Caco-2 (cell line): ENCODE measurements at regions of chr16 and their contacts with region 1.

Region 1: GRCh38 chr16:27313422-27314160 is at the start of gene IL4R:
- DNase-seq: peak; percentile 85 to 88
- H3K4me3 ChIP-seq: peak within 1 kb of the TSS; percentile 83
- H3K4me3 Mint-ChIP-seq: peak within 1 kb of the TSS; percentile 88
- H3K27ac Mint-ChIP-seq: peak within 1 kb of the TSS; percentile 90
- H3K4me1 ChIP-seq: peaks cover 32% of the 10 kb centered on the region
- H3K4me1 Mint-ChIP-seq: peaks cover 25% of the 10 kb centered on the region
- H3K27me3 ChIP-seq: no peaks in the 10 kb centered on the region
- H3K27me3 Mint-ChIP-seq: no peaks in the 10 kb centered on the region
- CTCF ChIP-seq: no peak
- total RNA-seq, gene IL4R: 32.6 and 34.4 TPM in 2 replicates

Region 2: GRCh38 chr16:27268376-27269299 is 45.0 kb before region 1 on chr16 and contains the start of gene NSMCE1:
- CTCF ChIA-PET with region 1: no interaction called
- POLR2A ChIA-PET with region 1: no interaction called
- intact Hi-C with region 1: loop called (anchors 2 kb)
- DNase-seq: peak; percentile 96
- H3K4me3 ChIP-seq: peak within 1 kb of the TSS; percentile 91
- H3K4me3 Mint-ChIP-seq: peak within 1 kb of the TSS; percentile 99
- H3K27ac Mint-ChIP-seq: peak within 1 kb of the TSS; percentile 97
- H3K4me1 ChIP-seq: peaks cover 25% of the 10 kb centered on the region
- H3K4me1 Mint-ChIP-seq: peaks cover 29% of the 10 kb centered on the region
- H3K27me3 ChIP-seq: no peaks in the 10 kb centered on the region
- H3K27me3 Mint-ChIP-seq: no peaks in the 10 kb centered on the region
- CTCF ChIP-seq: peak; percentile 16 to 31
- total RNA-seq, gene NSMCE1: 33.4 and 37.0 TPM in 2 replicates